A673 (cell line): ENCODE measurements at regions of chrX and their contacts with region 1.

Region 1: GRCh38 chrX:135086197-135086854 is 34.0 kb downstream of the ETDB start:
- DNase-seq: peak; percentile 61
- H3K4me3 ChIP-seq: no peak overlapping the region
- H3K27ac ChIP-seq: no peak overlapping the region
- H3K4me1 ChIP-seq: no peaks in the 10 kb centered on the region
- H3K27me3 ChIP-seq: no peaks in the 10 kb centered on the region
- CTCF ChIP-seq: peak; percentile 79

Region 2: DNA sequence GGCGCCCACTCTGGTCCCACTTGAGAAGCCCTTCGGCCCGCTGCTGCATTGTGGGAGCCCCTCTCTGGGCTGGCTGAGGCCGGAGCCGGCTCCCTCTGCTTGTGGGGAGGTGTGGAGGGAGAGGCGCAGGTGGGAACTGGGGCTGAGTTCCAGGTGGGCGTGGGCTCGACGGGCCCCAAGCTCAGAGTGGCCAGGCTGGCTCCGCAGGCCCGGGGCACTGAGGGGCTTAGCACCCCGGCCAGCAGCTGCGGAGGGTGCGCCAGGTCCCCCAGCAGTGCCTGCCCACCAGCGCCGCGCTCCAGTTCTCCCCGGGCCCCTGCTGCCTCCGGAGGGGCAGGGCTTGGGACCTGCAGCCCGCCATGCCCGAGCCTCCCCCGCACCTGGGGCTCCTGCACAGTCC is 160.8 kb before region 1 on chrX:
- CTCF ChIA-PET with region 1: no interaction called
- POLR2A ChIA-PET with region 1: no interaction called
- intact Hi-C with region 1: no loop called
- DNase-seq: no peak
- H3K4me3 ChIP-seq: no peak overlapping the region
- H3K27ac ChIP-seq: no peak overlapping the region
- H3K4me1 ChIP-seq: no peaks in the 10 kb centered on the region
- H3K27me3 ChIP-seq: no peaks in the 10 kb centered on the region
- CTCF ChIP-seq: no peak

Region 3: GRCh38 chrX:134969726-134970125 is 116.6 kb before region 1 on chrX:
- CTCF ChIA-PET with region 1: no interaction called
- POLR2A ChIA-PET with region 1: no interaction called
- intact Hi-C with region 1: loop called (anchors 1 kb)
- DNase-seq: no peak
- H3K4me3 ChIP-seq: no peak overlapping the region
- H3K27ac ChIP-seq: no peak overlapping the region
- H3K4me1 ChIP-seq: no peaks in the 10 kb centered on the region
- H3K27me3 ChIP-seq: no peaks in the 10 kb centered on the region
- CTCF ChIP-seq: no peak